Gastrocnemius medialis (tissue), 4 donors: ENCODE measurements at regions of chr22 and their contacts with region 1.

Region 1: GRCh38 chr22:43592476-43592875 is 180.7 kb downstream of the MPPED1 start:
- DNase-seq: no peak
- ATAC-seq: no peak
- H3K4me3 ChIP-seq: no peak overlapping the region
- H3K27ac ChIP-seq: no peak overlapping the region
- H3K4me1 ChIP-seq: no peaks in the 10 kb centered on the region
- H3K27me3 ChIP-seq: no peaks in the 10 kb centered on the region
- CTCF ChIP-seq: no peak
- POLR2A ChIP-seq: no peak

Region 2: DNA sequence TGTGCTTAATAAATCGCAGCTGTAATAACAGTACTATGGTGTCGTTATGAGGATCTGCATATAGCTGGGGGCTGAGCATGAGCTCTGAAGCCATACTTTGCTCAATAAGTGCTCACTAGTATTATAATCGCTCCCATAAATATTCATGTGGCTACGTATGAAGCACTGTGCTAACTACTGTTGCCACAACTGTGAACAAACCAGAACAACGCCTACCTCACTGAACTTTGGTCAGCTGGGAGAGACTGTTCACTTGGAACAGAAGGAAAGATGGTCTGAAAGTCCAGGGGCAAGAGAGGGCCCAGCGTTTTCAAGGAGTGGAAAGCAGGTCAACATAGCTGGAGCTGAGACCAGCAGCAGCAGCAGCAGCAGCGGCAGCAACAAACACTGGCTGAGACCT is 78.0 kb after region 1 on chr22:
- in situ Hi-C with region 1: no loop called
- intact Hi-C with region 1: loop called (anchors 5 kb)
- DNase-seq: no peak
- ATAC-seq: no peak
- H3K4me3 ChIP-seq: no peak overlapping the region
- H3K27ac ChIP-seq: no peak overlapping the region
- H3K4me1 ChIP-seq: no peaks in the 10 kb centered on the region
- H3K27me3 ChIP-seq: no peaks in the 10 kb centered on the region
- CTCF ChIP-seq: no peak
- POLR2A ChIP-seq: no peak

Region 3: GRCh38 chr22:43726322-43726721 is 133.8 kb after region 1 on chr22:
- in situ Hi-C with region 1: no loop called
- intact Hi-C with region 1: no loop called
- DNase-seq: no peak
- ATAC-seq: no peak
- H3K4me3 ChIP-seq: no peak overlapping the region
- H3K27ac ChIP-seq: no peak overlapping the region
- H3K4me1 ChIP-seq: no peaks in the 10 kb centered on the region
- H3K27me3 ChIP-seq: no peaks in the 10 kb centered on the region
- CTCF ChIP-seq: no peak
- POLR2A ChIP-seq: no peak